ENCODE measurements at regions of chr18 and their contacts with region 1.

Region 1: GRCh38 chr18:44733069-44733753 is 52.5 kb downstream of the SETBP1 start:
- DNase-seq: peak in 1 of 2 experiments; percentile 76
- H3K4me3 ChIP-seq: no peak overlapping the region
- H3K27ac ChIP-seq: peak overlapping the region; percentile 80
- H3K4me1 ChIP-seq: peaks cover 84% of the 10 kb centered on the region
- H3K27me3 ChIP-seq: no peaks in the 10 kb centered on the region
- CTCF ChIP-seq: no peak

Region 2: DNA sequence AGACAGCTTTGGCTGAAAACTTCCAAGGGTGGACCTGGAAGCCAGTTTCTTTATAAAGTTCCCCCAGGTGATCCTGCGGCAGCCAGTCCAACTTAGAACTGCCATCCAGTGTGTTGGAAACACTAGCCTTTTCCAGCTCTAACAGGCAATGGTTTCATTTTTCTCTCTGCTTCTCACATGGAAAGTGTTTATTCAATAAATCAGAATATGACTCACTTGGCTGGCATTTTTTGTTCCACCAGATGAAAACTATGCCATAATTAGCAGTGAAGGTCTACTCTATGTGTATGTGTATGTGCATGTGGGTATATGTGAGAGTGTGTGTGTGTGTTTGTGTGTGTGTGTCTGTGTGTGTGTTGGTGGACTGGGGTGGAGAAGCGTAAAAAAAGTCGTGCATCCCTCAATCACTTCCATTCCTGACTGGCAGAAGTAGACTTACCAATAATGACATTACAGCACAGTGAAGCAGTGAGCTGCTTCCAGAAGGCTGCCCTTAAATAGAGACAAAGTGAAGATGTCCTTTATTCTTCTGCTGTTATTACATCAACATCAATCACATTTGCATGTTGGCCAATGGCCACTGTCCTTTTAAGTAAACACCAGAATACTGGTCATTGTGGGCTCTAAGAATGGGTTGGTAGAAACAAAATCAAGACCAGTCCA is 143.4 kb before region 1 on chr18:
- CTCF ChIA-PET with region 1: no interaction called
- POLR2A ChIA-PET with region 1: no interaction called
- intact Hi-C with region 1: loop called (anchors 5 kb)
- DNase-seq: peak; percentile 15 to 60
- H3K4me3 ChIP-seq: no peak overlapping the region
- H3K27ac ChIP-seq: no peak overlapping the region
- H3K4me1 ChIP-seq: peaks cover 15% of the 10 kb centered on the region
- H3K27me3 ChIP-seq: no peaks in the 10 kb centered on the region
- CTCF ChIP-seq: no peak

Region 3: GRCh38 chr18:44673256-44673880 is 59.8 kb before region 1 on chr18:
- CTCF ChIA-PET with region 1: no interaction called
- POLR2A ChIA-PET with region 1: no interaction called
- intact Hi-C with region 1: no loop called
- DNase-seq: no peak
- H3K4me3 ChIP-seq: no peak overlapping the region
- H3K27ac ChIP-seq: no peak overlapping the region
- H3K4me1 ChIP-seq: peaks cover 13% of the 10 kb centered on the region
- H3K27me3 ChIP-seq: no peaks in the 10 kb centered on the region
- CTCF ChIP-seq: no peak